SK-N-SH (cell line): ENCODE measurements at regions of chr6 and their contacts with region 1.

Region 1: DNA sequence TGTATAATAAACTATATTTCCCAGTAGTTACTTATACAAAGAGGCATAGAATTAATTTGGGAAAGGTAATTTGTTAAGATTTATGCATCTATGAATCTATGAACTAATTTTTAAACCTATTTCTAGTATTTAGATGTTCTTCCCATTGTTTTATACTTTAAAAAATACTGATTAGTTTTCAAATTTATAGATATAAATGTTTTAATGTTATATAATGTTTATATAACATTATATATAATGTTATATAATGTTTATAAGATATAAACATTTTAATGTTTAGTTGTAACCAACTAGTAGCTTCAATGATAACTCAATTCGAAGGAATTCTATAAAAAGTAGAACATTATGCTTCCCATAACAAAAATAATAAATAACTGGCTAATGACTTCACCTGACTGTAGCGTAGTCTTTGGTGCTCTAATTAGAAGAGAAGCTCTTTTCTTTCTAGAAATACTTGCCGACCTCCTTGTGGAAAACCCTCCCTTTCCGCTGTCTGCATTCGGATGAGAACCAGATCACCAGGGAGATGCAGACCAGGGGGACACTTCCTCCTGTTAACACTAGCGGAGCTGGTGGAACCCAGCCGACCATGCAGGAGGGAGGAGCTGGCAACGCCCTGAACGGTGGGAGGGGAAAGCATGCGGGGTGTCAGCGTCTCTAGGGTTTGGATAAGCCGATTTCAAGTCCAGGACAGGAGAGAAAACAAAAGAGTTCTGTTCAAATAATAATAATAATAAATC is 158.4 kb downstream of the OR2B2 start:
- DNase-seq: peak; percentile 87
- H3K4me3 ChIP-seq: peak overlapping the region; percentile 50 to 97
- H3K27ac ChIP-seq: 0 out of 4 replicates have a peak overlapping the region, but pooled peaks of 1 of the 2 experiments have one; percentile 12
- H3K4me1 ChIP-seq: no peaks in the 10 kb centered on the region
- H3K27me3 ChIP-seq: peaks cover 1% of the 10 kb centered on the region; the same call in 1 of the 2 replicates
- CTCF ChIP-seq: no peak
- EP300 ChIP-seq: peak in 1 of 2 experiments; percentile 41; a peak in 1 of 4 replicates
- RAD21 ChIP-seq: no peak

Region 2: GRCh38 chr6:27518881-27519795 is 234.7 kb before region 1 on chr6:
- CTCF ChIA-PET with region 1: interaction called, 41 read pairs
- POLR2A ChIA-PET with region 1: no interaction called
- DNase-seq: peak; percentile 67
- H3K4me3 ChIP-seq: peak overlapping the region; percentile 93 to 97
- H3K27ac ChIP-seq: peak overlapping the region in 1 of 2 experiments; percentile 53; a peak in 2 of 4 replicates
- H3K4me1 ChIP-seq: peaks cover 0 to 3% of the 10 kb centered on the region in 2 experiments; a peak in 2 of 4 replicates
- H3K27me3 ChIP-seq: peaks cover 23% of the 10 kb centered on the region
- CTCF ChIP-seq: peak; percentile 86
- EP300 ChIP-seq: no peak
- RAD21 ChIP-seq: peak; percentile 57

Region 3: DNA sequence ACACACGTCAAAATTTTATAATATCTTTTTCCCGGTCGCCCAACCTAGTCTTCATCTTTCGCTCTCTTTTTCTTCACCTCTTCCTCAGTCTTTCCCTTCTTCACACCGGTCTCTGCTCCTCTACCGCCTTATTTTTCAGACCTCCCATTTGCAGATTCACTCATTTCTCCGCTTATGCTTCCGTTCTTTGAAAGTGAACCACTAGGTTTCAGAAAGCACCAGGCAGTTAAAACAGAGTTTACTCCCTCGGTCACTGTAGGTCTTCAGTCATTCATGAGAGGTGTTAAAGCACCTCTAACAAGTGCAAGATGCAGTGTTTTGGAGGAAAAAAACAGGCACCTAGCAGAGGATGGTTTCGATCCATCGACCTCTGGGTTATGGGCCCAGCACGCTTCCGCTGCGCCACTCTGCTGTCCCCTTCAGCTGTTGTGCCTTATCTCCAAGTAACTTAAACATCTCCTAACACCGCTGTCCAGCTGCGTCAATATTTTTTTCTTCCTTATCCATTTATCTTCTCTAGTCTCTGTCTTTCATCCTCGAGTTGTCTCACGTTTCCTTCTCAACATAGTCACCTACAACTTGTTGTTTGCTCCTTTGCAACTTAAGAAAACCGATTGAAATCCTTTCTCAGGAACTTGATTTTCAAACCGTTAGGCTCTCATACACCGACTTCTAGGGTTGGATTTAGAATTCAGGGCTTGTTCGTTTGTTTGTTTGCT is 161.2 kb before region 1 on chr6:
- CTCF ChIA-PET with region 1: no interaction called
- POLR2A ChIA-PET with region 1: no interaction called
- DNase-seq: no peak
- H3K4me3 ChIP-seq: peak overlapping the region; percentile 39 to 40; a peak in 3 of 4 replicates
- H3K27ac ChIP-seq: no peak overlapping the region
- H3K4me1 ChIP-seq: no peaks in the 10 kb centered on the region; a peak in 1 of 4 replicates
- H3K27me3 ChIP-seq: peaks cover 47% of the 10 kb centered on the region
- CTCF ChIP-seq: no peak
- EP300 ChIP-seq: no peak
- RAD21 ChIP-seq: no peak

Region 4: GRCh38 chr6:27687154-27688013 is 66.5 kb before region 1 on chr6:
- CTCF ChIA-PET with region 1: interaction called, 11 read pairs
- POLR2A ChIA-PET with region 1: no interaction called
- DNase-seq: peak; percentile 78
- H3K4me3 ChIP-seq: peak overlapping the region; percentile 71 to 92
- H3K27ac ChIP-seq: peak overlapping the region; percentile 47 to 60
- H3K4me1 ChIP-seq: no peaks in the 10 kb centered on the region
- H3K27me3 ChIP-seq: no peaks in the 10 kb centered on the region; the same call in 1 of the 2 replicates
- CTCF ChIP-seq: peak; percentile 76
- EP300 ChIP-seq: no peak
- RAD21 ChIP-seq: peak; percentile 59

Region 5: GRCh38 chr6:27743818-27744217 is 10.0 kb before region 1 on chr6:
- CTCF ChIA-PET with region 1: interaction called, 16 read pairs
- POLR2A ChIA-PET with region 1: no interaction called
- DNase-seq: no peak
- H3K4me3 ChIP-seq: no peak overlapping the region
- H3K27ac ChIP-seq: no peak overlapping the region
- H3K4me1 ChIP-seq: no peaks in the 10 kb centered on the region
- H3K27me3 ChIP-seq: peaks cover 22% of the 10 kb centered on the region; the same call in 1 of the 2 replicates
- CTCF ChIP-seq: no peak
- EP300 ChIP-seq: no peak
- RAD21 ChIP-seq: no peak

Region 6: DNA sequence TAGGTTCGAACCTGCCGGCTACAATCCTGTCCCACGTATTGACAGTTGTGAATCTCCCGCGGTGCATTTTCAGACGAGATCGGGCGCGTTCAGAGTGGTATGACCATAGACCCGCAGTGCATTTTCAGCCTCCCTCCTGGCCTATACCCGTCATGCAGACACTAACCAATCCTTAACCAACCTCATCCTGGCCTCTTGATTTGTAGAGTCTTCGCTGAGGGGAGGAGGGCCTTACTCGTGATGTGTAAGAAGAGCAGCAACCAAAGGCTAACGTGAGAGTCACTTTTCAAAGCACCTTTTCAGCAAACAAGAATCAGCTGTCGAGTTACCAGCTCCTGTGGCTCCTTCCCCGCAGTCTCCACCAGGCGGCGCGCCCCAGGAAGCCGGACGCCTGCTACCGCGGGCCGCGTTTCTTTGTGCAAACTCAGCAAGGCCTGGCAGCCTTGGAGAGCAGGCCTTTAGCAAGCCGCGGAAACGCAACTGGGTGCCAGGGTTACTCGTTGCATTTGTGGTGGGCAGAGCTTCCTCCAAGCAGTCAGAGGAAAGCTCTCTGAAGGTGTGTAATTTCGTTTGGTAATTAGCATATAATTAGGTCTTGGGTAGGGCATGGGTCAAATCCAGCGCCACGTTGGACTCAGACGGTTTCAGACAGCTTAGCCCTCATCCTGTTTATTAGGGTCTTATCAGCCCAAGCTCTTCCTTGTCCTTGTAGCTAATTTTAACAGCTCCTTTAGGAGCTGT is 18.6 kb after region 1 on chr6:
- CTCF ChIA-PET with region 1: interaction called, 41 read pairs
- POLR2A ChIA-PET with region 1: interaction called, 3 read pairs
- DNase-seq: peak; percentile 83
- H3K4me3 ChIP-seq: no peak overlapping the region; a peak in 1 of 4 replicates
- H3K27ac ChIP-seq: no peak overlapping the region
- H3K4me1 ChIP-seq: peaks cover 0 to 3% of the 10 kb centered on the region in 2 experiments; a peak in 1 of 4 replicates
- H3K27me3 ChIP-seq: no peaks in the 10 kb centered on the region
- CTCF ChIP-seq: peak; percentile 88
- EP300 ChIP-seq: no peak
- RAD21 ChIP-seq: peak; percentile 67

Region 7: GRCh38 chr6:28212510-28213212 is 458.8 kb after region 1 on chr6:
- CTCF ChIA-PET with region 1: no interaction called
- POLR2A ChIA-PET with region 1: no interaction called
- DNase-seq: peak; percentile 33
- H3K4me3 ChIP-seq: peak overlapping the region; percentile 62 to 63
- H3K27ac ChIP-seq: no peak overlapping the region; a peak in 1 of 4 replicates
- H3K4me1 ChIP-seq: peaks cover 0 to 10% of the 10 kb centered on the region in 2 experiments; a peak in 3 of 4 replicates
- H3K27me3 ChIP-seq: peaks cover 37% of the 10 kb centered on the region; the same call in 1 of the 2 replicates
- CTCF ChIP-seq: peak; percentile 44
- EP300 ChIP-seq: no peak
- RAD21 ChIP-seq: 0 out of 2 replicates have a peak, but pooled peaks have one; percentile 25